ENCODE measurements at regions of chr18 and their contacts with region 1.

Region 1: DNA sequence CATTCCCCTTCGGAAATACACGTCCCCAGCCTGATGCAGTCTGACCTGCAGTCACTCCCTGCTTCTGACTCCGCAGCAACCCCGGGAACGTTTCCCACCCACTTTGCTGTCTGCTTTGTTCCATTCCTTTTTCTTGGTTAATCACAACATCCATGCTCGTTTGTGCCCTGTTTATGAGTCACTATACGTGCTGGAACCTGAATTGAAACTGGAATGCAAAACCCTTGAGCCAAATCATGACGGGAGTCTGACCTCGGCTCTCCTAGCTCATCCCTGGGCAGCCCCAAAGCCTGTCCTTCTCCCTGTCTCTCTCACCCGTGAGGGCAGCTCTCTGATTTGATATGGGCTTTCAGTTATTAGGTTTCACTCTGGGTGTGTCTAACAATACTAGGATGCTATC is 57.1 kb upstream of the RNF152 start:
- DNase-seq: no peak
- ATAC-seq: no peak
- H3K4me3 Mint-ChIP-seq: no peak overlapping the region
- H3K27ac Mint-ChIP-seq: no peak overlapping the region
- H3K4me1 Mint-ChIP-seq: peaks cover 18% of the 10 kb centered on the region
- H3K27me3 Mint-ChIP-seq: peaks cover 34% of the 10 kb centered on the region
- CTCF ChIP-seq: no peak

Region 2: DNA sequence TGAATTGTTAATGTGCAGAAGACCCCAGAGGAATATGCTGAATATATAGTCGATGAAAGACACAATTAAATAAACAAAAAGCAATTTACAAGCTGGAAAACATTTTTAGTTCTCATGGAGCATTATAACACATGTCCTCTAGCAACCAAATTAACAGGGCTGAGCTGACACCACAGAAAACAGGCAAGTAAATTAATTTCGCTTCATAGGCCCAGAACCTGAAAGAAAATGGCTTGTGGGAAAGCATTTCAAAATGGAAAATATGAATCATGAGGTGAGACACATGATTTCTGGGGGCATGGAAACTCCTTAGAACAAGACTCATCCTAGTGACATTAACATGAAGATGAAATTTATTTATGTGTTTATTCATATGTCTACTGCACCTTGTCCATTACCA is 32.1 kb before region 1 on chr18:
- CTCF ChIA-PET with region 1: interaction called, 3 read pairs
- POLR2A ChIA-PET with region 1: no interaction called
- intact Hi-C with region 1: loop called (anchors 5 kb)
- DNase-seq: no peak
- ATAC-seq: peak; percentile 54
- H3K4me3 Mint-ChIP-seq: no peak overlapping the region
- H3K27ac Mint-ChIP-seq: peak overlapping the region; percentile 34
- H3K4me1 Mint-ChIP-seq: peaks cover 17% of the 10 kb centered on the region
- H3K27me3 Mint-ChIP-seq: peaks cover 4% of the 10 kb centered on the region
- CTCF ChIP-seq: no peak

Region 3: GRCh38 chr18:61926532-61926931 is 23.4 kb before region 1 on chr18:
- CTCF ChIA-PET with region 1: interaction called, 3 read pairs
- POLR2A ChIA-PET with region 1: no interaction called
- intact Hi-C with region 1: loop called (anchors 2 kb)
- DNase-seq: peak; percentile 84
- ATAC-seq: peak; percentile 85
- H3K4me3 Mint-ChIP-seq: no peak overlapping the region
- H3K27ac Mint-ChIP-seq: no peak overlapping the region
- H3K4me1 Mint-ChIP-seq: peaks cover 18% of the 10 kb centered on the region
- H3K27me3 Mint-ChIP-seq: peaks cover 11% of the 10 kb centered on the region
- CTCF ChIP-seq: no peak

Measured in activated CD8-positive, alpha-beta T cell treated with anti-CD3 and anti-CD28 coated beads for 36 hours (primary cell).